ENCODE measurements at regions of chr2 and their contacts with region 1.

Region 1: DNA sequence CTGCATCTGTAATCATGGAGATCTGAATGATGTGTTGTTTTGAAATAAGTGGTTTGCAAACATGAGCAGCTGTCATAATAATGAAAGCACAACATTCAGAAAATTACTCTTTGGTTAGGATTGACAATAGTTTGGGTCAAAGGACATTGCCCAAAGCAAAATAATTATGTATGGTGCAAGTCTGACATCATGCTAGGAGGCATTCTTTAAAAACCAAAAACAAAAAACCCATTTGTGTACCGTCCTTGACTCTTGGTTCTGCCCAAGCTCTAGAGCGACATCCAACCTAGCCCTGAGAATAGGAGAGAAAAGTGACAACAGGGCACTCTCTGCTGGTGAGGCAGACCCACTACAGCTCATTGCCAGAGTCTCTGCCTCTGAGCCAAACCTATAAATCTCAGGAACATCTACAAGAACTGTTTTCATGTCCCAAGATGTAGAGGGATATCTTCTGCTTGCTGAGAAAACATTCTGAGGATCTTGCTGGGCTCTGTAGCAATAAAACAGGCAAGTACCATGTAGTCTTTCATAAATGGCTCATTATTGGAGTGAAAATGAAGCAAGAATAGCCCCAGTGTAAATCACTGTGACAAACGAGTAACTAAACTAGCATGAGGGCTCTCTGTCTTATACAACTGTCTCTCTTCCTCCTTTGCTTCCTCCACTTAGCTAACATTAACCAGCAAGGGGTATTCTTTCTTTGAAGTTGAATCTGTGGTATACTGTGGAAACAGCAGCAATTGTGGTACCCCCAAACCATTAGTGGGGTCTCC is 266.8 kb upstream of the CXCR4 start:
- DNase-seq: peak; percentile 43
- H3K4me3 Mint-ChIP-seq: no peak overlapping the region
- H3K27ac Mint-ChIP-seq: peak overlapping the region; percentile 99
- H3K4me1 Mint-ChIP-seq: peaks cover 39% of the 10 kb centered on the region
- H3K27me3 Mint-ChIP-seq: no peaks in the 10 kb centered on the region

Region 2: DNA sequence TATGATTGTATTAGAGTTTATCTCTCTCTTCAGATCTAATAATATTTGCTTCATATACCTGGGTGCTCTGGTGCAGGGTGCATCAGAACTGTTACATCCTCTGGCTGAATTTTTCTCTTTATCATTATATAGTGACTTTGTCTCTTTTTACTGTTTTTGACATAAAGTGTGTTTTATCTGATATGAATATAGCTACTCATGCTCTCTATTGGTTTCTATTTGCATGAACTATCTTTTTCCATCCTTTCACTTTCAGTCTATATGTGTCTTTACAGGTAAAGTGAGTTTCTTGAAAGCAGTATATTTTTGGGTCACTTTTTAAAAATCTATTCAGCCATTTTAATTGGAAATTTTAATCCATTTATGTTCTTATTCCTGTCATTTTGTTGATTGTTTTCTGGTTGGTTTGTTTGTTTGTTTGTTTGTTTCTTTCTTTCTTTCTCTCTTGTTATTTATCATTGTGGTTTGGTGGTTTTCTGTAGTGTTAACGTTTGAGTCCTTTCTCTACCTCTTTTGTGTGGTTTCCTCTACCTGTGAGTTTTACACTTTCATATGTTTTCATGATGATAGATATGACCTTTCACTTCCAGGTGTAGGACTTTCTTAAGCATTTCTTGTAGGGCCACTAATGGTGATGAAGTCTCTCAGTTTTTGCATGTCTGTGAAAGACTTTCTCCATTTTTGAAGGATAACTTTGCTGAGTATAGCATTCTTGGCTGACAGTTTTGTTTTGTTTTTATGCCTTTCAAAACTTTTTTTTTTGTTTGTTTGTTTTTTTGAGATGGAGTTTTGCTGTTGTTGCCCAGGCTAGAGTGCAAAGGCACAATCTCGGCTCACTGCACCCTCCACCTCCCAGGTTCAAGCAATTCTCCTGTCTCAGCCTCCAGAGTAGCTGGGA is 1411.2 kb before region 1 on chr2:
- intact Hi-C with region 1: loop called (anchors 10 kb)
- DNase-seq: no peak
- H3K4me3 Mint-ChIP-seq: peak overlapping the region; percentile 0
- H3K27ac Mint-ChIP-seq: peak overlapping the region; percentile 54
- H3K4me1 Mint-ChIP-seq: peaks cover 15% of the 10 kb centered on the region
- H3K27me3 Mint-ChIP-seq: peaks cover 15% of the 10 kb centered on the region

Region 3: GRCh38 chr2:135664623-135665068 is 720.1 kb before region 1 on chr2:
- intact Hi-C with region 1: loop called (anchors 2 kb)
- DNase-seq: no peak
- H3K4me3 Mint-ChIP-seq: no peak overlapping the region
- H3K27ac Mint-ChIP-seq: peak overlapping the region; percentile 71
- H3K4me1 Mint-ChIP-seq: peaks cover 37% of the 10 kb centered on the region
- H3K27me3 Mint-ChIP-seq: no peaks in the 10 kb centered on the region

Region 4: GRCh38 chr2:135876066-135876711 is 508.5 kb before region 1 on chr2 and contains the start of gene MCM6:
- intact Hi-C with region 1: loop called (anchors 1 kb)
- DNase-seq: peak; percentile 99
- H3K4me3 Mint-ChIP-seq: peak within 1 kb of the TSS; percentile 98
- H3K27ac Mint-ChIP-seq: peak within 1 kb of the TSS; percentile 99
- H3K4me1 Mint-ChIP-seq: peaks cover 45% of the 10 kb centered on the region
- H3K27me3 Mint-ChIP-seq: peaks cover 2% of the 10 kb centered on the region
- total RNA-seq, gene MCM6: 176 and 177 TPM in 2 replicates

Region 5: DNA sequence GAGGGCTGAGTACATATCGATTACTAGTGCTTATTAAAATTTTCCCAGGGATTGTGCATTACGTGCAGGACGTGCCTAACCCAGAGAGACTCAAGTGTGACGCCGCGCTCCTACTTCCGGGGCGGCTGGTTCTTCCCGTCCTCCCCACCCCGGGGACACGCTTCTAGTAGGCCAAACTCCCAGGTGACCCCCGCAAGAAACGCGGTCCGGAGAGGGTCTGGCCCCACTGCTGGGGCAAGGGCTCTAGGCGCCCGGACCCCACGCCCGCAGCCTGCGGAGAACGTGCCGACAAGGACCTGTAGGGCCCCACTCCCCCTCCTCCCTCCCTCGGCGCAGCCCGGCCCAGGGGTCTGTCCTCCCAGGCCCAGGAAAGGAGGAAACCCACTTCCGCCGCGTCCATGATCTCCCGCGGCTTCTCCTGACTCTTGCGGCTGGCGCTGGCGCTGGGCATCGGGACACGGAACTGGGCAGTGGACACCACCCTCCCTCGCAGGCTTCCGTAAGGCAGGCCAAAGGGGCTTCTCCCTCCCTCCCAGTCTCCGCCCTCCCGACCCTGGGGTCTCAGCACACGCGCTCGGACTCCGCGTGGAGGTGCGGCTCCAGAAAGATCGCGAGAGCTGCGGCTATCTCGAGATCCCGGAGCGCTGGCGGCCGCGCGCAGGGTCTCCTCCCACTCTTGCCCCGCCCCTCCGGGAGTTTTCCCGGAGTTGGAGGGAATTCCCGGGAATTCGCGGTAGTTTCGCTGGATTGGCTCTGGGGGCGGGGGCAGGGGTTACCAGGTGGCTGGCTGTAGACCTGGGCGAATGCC is 399.5 kb before region 1 on chr2 and contains the start of gene DARS1:
- intact Hi-C with region 1: loop called (anchors 1 kb)
- DNase-seq: peak; percentile 78
- H3K4me3 Mint-ChIP-seq: peak within 1 kb of the TSS; percentile 91
- H3K27ac Mint-ChIP-seq: peak within 1 kb of the TSS; percentile 97
- H3K4me1 Mint-ChIP-seq: peaks cover 62% of the 10 kb centered on the region
- H3K27me3 Mint-ChIP-seq: no peaks in the 10 kb centered on the region
- total RNA-seq, gene DARS1: 132 and 140 TPM in 2 replicates

Region 6: GRCh38 chr2:136025057-136025973 is 359.4 kb before region 1 on chr2:
- intact Hi-C with region 1: no loop called
- DNase-seq: no peak
- H3K4me3 Mint-ChIP-seq: no peak overlapping the region
- H3K27ac Mint-ChIP-seq: no peak overlapping the region
- H3K4me1 Mint-ChIP-seq: peaks cover 7% of the 10 kb centered on the region
- H3K27me3 Mint-ChIP-seq: peaks cover 2% of the 10 kb centered on the region

Region 7: DNA sequence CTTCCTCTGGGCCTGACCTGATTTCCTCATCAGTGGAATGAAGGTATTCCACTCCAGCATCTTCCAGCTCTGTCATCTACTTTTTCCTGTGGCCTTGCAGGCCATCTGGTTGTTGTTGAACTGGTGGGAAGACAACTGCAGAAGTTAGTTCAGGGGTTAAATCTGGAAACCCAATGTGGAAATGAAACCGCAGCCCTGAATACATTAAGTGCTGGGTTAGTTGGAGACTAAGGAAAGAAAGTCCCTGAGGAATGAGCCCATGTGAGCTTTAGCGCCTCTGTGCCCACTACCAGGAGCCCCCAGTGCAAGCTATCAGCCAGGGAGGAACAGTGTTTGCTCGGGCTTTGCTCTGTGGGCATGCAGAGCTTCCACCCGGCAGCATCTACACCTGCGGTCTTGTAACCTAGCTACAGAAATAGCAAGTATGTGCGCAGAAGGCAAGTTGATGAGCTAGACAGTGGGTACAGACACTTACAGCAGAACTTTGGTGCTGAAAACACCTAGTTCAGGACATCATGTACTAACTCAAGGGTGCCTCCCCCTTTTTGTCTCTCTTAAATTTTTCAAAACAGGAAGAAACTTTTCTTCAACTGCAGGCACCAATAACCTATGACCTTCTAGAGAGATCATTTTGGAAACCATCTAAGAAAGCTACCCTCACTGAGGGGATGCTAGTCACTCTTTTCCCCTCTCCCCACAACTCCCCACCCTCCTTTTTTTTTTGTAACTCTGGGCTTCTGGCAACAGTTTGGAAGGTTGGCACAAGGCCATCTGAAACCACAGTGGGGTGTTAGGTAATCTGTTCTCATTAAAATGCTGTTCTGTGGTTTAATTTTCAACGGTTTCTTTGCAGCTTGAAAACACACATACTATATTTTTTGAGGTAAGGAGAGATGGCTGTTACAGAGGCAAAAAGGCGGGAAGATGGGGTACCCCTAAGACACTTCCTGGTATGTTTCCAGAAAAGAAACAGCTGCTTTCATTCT is 248.5 kb before region 1 on chr2:
- intact Hi-C with region 1: loop called (anchors 1 kb)
- DNase-seq: peak; percentile 59
- H3K4me3 Mint-ChIP-seq: peak overlapping the region; percentile 17
- H3K27ac Mint-ChIP-seq: peak overlapping the region; percentile 60
- H3K4me1 Mint-ChIP-seq: peaks cover 82% of the 10 kb centered on the region
- H3K27me3 Mint-ChIP-seq: peaks cover 30% of the 10 kb centered on the region

Region 8: GRCh38 chr2:136327162-136327852 is 57.4 kb before region 1 on chr2:
- intact Hi-C with region 1: loop called (anchors 1 kb)
- DNase-seq: peak; percentile 69
- H3K4me3 Mint-ChIP-seq: peak overlapping the region; percentile 43
- H3K27ac Mint-ChIP-seq: peak overlapping the region; percentile 91
- H3K4me1 Mint-ChIP-seq: peaks cover 68% of the 10 kb centered on the region
- H3K27me3 Mint-ChIP-seq: peaks cover 4% of the 10 kb centered on the region

Measured in activated T-helper 1 cell treated with anti-CD3 and anti-CD28 coated beads, Interleukin-12 subunit alpha, Interleukin-12 subunit beta, Interleukin-2, Interleukin-4 antibody, amounts not matched to agents 30 ng/mL and 10 ng/mL and 1 ng/mL, durations not matched to agents 14 hours and 24 hours and 36 hours (primary cell).